ENCODE measurements at regions of chr17 and their contacts with region 1.

Region 1: DNA sequence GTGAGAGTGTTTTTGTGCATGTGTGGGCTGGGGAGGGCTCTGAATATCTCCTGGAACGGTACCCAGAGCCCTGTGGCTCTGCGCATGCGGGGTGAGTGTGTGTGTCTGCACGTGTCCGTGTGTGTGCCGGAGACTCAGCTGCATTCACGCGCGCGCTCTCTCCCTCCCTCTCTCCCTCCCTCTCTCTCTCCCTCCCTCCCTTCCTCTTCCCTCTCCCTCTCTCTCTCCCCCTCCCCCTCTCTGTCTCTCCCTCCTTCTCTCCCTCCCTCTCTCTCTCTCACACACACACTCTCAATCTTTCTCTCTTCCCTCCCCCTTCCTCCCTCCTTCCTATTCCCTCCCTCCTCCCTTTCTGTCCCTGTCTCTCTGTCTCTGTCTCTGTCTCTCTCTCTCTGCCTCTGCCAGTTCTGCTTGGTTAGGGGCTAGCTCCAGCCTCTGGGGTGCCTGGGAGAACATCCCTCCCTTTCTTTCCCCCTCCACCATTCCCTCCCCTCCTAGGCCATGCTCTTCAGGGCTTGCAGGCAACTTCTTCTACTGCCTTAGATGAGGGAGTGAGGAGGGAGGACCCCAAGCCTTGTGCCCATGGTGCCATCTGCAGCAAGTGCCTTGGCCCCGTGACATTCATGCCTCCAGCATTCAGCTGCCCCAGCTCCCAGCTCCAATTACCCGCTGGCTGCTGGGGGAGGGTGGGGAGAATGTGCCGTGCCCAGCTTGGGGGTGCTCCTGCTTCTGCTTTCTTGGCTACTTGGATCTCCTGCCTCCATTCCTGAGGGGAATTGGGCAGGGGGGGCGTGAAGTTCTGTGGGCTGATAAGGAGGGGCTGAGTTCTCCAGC is 6.4 kb downstream of the THRA start:
- DNase-seq: peak; percentile 91 to 98 (median 94)
- H3K4me3 ChIP-seq: peak overlapping the region; percentile 29 to 71 (median 52)
- H3K27ac ChIP-seq: peak overlapping the region; percentile 96 to 100 (median 100)
- H3K27me3 ChIP-seq: no peaks in the 10 kb centered on the region
- CTCF ChIP-seq: peak in 3 of 56 donors; percentile 4 to 19 (median 8)

Region 2: DNA sequence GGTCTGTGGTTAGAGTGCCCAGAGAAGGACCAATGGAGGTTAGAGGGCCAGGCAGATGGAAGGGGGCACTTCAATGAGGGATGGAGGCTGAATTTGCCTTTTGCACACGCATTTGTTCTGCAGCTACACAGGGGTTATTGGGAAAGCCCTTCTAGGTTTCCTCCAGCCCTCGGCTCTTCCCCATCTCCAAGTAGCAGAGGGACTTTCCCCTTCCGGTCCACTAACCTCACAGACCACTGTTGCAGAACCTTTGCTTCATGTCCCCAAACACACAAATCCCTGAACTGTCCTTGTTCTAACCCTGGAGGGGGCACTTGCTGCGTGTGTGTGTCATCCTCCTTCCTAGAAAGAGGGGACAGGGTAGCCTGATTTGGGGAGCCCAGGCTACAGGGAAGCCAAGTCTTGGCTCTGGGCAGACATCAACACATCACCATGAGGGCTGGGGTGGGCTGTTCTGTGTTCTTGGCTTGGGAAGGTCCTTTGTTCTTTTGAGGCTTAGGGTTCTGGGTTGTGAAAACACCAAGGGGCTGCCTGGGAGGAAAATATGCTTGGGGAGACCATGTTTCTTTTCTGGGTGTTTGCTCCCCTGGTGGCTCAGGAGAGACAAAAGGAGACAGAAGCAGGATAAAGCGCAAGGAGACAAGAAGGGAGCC is 38.5 kb after region 1 on chr17:
- intact Hi-C with region 1: loop called (anchors 2 kb)
- DNase-seq: peak in 1 of 10 donors; percentile 35
- H3K4me3 ChIP-seq: peak overlapping the region in 51 of 59 donors; percentile 0 to 53 (median 28)
- H3K27ac ChIP-seq: peak overlapping the region; percentile 93 to 100 (median 99)
- H3K27me3 ChIP-seq: no peaks in the 10 kb centered on the region
- CTCF ChIP-seq: no peak

Region 3: DNA sequence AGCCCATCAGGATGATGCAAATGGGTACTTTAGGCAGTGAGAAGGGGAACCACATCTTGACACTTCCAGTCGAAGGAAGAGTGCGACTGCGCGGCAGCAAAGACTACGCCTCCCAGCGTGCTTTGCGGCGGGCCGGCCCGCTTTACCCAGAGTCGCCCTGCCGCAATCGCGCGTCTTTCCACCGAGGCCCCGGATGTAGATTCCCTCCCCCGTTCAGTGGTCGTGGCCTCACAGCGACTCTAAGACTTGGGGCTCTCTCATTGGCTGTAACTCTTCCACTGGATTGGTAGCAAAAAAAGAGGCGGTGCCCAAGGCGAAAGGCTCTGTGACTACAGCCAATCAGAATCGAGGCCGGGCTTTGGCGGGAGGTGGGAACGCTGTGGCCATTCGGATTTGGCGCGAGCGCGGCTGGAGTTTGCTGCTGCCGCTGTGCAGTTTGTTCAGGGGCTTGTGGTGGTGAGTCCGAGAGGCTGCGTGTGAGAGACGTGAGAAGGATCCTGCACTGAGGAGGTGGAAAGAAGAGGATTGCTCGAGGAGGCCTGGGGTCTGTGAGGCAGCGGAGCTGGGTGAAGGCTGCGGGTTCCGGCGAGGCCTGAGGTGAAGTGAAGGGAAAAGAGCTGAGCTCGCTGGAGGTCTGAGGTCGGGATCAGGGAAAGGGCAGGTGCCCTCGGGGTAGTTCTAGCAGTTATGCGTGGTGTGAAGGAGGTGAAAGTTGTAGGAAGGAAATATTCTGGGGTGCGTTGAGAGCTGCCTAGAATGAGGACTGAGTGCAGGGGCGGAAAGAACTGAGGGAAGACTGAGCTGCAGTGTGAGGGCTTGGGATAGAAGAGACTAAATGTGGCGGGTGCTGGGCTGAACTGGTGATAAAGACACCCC is 218.6 kb after region 1 on chr17 and contains the start of gene CDC6:
- intact Hi-C with region 1: no loop called
- DNase-seq: peak; percentile 98 to 99 (median 99)
- H3K4me3 ChIP-seq: peak within 1 kb of the TSS; percentile 41 to 91 (median 66)
- H3K27ac ChIP-seq: peak within 1 kb of the TSS in 49 of 59 donors; percentile 3 to 83 (median 66)
- H3K27me3 ChIP-seq: no peaks in the 10 kb centered on the region
- CTCF ChIP-seq: peak in 42 of 56 donors; percentile 10 to 69 (median 38)
- total RNA-seq, gene CDC6: 1.0 to 12.6 (median 6.7) TPM

Measured in dorsolateral prefrontal cortex (tissue), 120 donors.